Heart right ventricle (tissue), 16 donors: ENCODE measurements at regions of chr2 and their contacts with region 1.

Region 1: DNA sequence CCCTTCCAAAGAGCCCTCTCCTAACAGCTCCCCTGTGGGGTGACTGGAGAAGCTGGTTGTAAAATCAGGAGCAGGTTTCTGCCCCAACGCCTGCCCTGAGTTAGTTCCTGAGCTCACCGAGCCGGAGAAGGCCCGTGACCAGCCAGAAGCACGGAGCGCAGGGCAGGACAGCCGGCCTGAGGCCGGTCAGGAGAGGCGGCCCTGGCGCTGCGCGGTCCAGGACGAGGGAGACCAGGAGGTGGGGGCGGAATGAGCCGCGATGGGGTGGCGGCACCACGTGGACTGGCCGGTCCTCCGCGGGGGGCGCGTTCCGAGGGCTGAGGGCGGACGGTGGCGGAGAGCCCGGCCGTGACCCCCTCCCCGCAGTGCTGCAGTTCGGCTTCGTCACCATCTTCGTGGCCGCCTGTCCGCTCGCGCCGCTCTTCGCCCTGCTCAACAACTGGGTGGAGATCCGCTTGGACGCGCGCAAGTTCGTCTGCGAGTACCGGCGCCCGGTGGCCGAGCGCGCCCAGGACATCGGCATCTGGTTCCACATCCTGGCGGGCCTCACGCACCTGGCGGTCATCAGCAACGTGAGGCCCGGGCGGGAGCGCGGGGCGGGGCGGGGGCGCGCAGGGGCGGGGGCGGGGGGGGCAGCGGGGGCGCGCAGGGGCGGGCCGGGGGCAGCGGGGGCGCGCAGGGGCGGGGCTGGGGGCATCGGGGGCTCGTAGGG is 29.0 kb downstream of the ANO7 start:
- DNase-seq: peak; percentile 59 to 69
- ATAC-seq: peak; percentile 80 to 91 (median 85)
- H3K4me3 ChIP-seq: peak overlapping the region in 9 of 10 donors; percentile 40 to 68 (median 60)
- H3K27ac ChIP-seq: peak overlapping the region; percentile 14 to 92 (median 82)
- H3K4me1 ChIP-seq: peaks cover 7 to 17% (median 9%) of the 10 kb centered on the region in 9 donors
- H3K27me3 ChIP-seq: peaks cover 0 to 8% (median 0%) of the 10 kb centered on the region in 7 donors
- CTCF ChIP-seq: peak in 2 of 9 donors; percentile 9 to 14

Region 2: DNA sequence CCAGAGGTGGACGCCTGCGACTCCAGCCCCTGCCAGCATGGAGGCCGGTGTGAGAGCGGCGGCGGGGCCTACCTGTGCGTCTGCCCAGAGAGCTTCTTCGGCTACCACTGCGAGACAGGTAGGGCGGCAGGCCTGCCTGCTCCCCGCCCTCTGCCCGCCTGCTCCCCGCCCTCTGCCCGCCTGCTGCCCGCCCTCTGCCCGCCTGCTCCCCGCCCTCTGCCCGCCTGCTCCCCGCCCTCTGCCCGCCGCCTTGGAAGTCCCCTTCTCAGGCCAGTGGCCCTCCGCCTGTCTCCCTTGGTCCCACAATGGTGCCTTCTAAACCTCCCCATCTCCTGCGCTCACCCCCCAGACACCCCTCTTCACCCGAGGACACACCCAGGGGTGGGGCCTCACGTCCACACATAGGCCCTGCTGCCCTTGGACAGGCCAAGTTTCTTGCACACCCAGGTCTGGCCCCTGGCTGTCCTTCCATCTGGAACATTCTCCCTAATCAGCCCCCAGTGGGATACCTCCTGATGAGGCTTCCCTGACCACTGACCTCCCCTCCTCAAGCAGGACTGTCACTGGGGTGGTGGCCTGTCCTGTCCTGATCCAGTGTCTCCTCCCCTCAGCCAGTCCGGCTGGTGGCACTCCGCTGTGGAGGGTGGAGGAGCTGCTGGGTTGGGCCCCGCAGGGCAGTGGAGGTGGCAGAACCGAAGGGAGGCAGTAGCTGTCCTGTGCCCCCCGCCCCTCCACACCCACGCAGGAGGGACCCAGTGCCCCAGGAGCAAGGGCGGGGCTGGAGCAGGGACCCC is 153.3 kb before region 1 on chr2:
- intact Hi-C with region 1: no loop called
- DNase-seq: peak in 1 of 2 donors; percentile 6
- ATAC-seq: peak in 7 of 8 donors; percentile 6 to 50 (median 34)
- H3K4me3 ChIP-seq: peak overlapping the region in 1 of 10 donors; percentile 11
- H3K27ac ChIP-seq: no peak overlapping the region
- H3K4me1 ChIP-seq: peaks cover 0 to 4% (median 0%) of the 10 kb centered on the region in 9 donors
- H3K27me3 ChIP-seq: peaks cover 0 to 9% (median 0%) of the 10 kb centered on the region in 7 donors
- CTCF ChIP-seq: no peak

Region 3: GRCh38 chr2:241102239-241102803 is 115.2 kb before region 1 on chr2 and contains the start of gene MTERF4:
- intact Hi-C with region 1: loop called in 2 of 10 experiments (anchors 10 kb)
- DNase-seq: peak; percentile 85 to 88
- ATAC-seq: peak; percentile 98 to 99 (median 99)
- H3K4me3 ChIP-seq: peak within 1 kb of the TSS; percentile 68 to 99 (median 92)
- H3K27ac ChIP-seq: peak within 1 kb of the TSS; percentile 19 to 94 (median 88)
- H3K4me1 ChIP-seq: peaks cover 6 to 28% (median 21%) of the 10 kb centered on the region in 9 donors
- H3K27me3 ChIP-seq: no peaks in the 10 kb centered on the region
- CTCF ChIP-seq: no peak
- total RNA-seq, gene MTERF4: 18.9 to 27.1 (median 23.2) TPM

Region 4: DNA sequence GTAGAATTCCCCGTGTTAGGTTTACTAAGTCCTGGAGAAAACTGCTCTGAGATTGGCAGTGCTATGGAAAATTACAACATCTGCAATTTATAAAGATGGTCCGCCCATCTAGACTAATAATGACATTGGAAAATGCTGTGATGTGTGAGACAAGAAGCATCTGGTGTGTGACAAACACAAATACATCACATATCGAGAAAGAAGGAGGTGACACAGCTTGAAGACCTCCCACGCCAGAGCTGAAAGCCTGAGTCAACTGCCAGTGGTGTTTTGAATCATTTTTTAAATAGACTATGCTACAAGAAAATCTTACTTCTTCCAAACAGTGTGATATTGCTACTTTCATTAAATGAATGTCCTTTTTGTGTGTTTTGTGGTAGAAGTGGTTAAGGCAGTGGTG is 37.6 kb before region 1 on chr2:
- intact Hi-C with region 1: no loop called
- DNase-seq: no peak
- ATAC-seq: peak in 4 of 8 donors; percentile 46 to 66 (median 51)
- H3K4me3 ChIP-seq: no peak overlapping the region
- H3K27ac ChIP-seq: no peak overlapping the region
- H3K4me1 ChIP-seq: no peaks in the 10 kb centered on the region
- H3K27me3 ChIP-seq: no peaks in the 10 kb centered on the region
- CTCF ChIP-seq: no peak